Vagina (tissue), 2 donors: ENCODE measurements at regions of chr5 and their contacts with region 1.

Region 1: DNA sequence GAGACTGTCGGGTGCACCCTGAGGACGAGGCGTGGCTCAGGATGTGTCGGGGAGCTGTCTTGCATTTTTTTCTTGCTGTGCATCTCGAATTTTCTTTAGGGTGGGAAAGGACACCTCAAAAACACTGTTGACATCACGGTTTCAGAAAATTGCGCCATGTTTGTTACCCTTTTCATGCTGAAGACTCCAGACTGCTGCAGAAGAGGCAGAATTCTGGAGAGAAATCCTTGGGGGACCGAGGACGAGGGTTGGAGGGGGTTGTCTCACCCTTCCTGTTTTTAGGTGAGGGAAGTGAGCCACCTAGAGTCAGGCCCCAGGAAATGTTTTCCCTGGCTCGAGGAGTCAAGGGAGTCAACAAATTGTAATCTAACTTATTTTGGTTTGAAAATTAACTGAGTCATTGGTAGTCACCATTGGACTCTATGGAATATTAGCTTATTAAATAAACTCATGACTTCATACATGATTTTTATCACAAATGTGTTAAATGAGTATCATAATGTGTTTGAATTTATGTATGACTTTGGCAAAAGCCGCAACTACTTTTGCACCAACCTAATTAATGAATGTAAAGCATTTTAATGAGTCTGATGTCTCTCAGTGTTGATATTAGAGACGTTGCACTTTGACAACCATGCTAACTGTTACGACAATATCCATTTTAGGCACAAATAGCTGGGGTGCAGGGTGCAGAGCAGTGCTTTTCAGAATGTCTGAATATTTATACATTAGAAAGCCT is 724 bp upstream of the LYSMD3 start:
- DNase-seq: no peak
- H3K4me3 ChIP-seq: peak overlapping the region; percentile 91 to 96
- H3K27ac ChIP-seq: peak overlapping the region; percentile 97
- H3K4me1 ChIP-seq: peaks cover 34% of the 10 kb centered on the region
- H3K27me3 ChIP-seq: no peaks in the 10 kb centered on the region
- CTCF ChIP-seq: peak; percentile 44 to 64 (median 57)
- POLR2A ChIP-seq: no peak

Region 2: DNA sequence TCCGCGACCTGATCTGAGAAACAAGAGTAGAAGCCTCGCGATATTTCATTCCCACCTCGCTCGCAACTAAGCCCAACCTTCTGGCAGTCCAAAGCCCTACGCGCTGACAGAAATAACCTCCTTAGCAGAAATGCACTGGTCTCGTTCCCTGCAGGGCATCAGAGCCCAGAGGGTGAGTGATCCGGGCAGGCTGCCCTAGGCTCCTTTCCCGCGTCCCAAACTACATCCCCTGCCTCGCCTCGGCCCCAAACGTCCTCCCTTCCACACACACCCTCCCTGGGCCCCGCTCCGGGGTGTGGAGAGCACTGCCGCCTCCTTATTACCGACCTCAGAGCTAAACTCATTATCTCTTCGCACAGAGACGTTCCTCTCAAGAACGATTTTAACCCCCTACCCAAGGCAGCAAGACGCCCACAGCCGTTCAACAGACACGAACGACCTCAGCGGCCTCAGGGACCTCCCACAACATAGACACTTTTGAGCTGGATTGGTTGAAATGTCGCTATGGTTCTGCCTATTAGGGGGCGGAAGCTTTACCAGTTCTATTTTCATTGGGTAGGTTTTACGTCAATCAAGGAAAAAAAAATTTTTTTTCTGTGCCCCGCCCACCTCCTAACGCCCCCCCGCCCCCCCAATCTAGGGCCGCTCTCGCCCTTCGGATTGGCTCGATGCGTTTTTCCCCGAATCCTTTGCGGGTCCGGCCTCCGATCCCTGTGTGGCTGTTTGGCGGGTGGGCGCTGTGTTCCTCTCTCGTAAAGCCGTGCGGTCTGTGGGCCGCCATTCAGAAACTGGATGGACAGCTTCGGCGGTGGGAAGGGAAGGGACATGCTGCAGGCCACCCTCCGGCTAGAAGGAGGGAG is 120.6 kb before region 1 on chr5 and contains the start of gene CETN3:
- intact Hi-C with region 1: loop called (anchors 10 kb)
- DNase-seq: peak in 1 of 2 donors; percentile 98
- H3K4me3 ChIP-seq: peak within 1 kb of the TSS; percentile 68 to 69
- H3K27ac ChIP-seq: peak within 1 kb of the TSS; percentile 91
- H3K4me1 ChIP-seq: peaks cover 9% of the 10 kb centered on the region
- H3K27me3 ChIP-seq: no peaks in the 10 kb centered on the region
- CTCF ChIP-seq: no peak
- POLR2A ChIP-seq: peak in 1 of 2 donors; percentile 72
- total RNA-seq, gene CETN3: 11.0 TPM

Region 3: GRCh38 chr5:90474235-90475109 is 55.6 kb before region 1 on chr5 and contains the starts of genes MBLAC2 and POLR3G:
- intact Hi-C with region 1: loop called (anchors 5 kb)
- DNase-seq: peak in 1 of 2 donors; percentile 92
- H3K4me3 ChIP-seq: peak within 1 kb of the TSS; percentile 72 to 97
- H3K27ac ChIP-seq: peak within 1 kb of the TSS; percentile 80
- H3K4me1 ChIP-seq: peaks cover 19% of the 10 kb centered on the region
- H3K27me3 ChIP-seq: no peaks in the 10 kb centered on the region
- CTCF ChIP-seq: peak in 2 of 3 experiments; percentile 11 to 49
- POLR2A ChIP-seq: peak in 1 of 2 donors; percentile 68
- total RNA-seq, gene MBLAC2: 8.8 TPM
- total RNA-seq, gene POLR3G: 5.4 TPM

Region 4: GRCh38 chr5:90488791-90489190 is 41.3 kb before region 1 on chr5:
- intact Hi-C with region 1: no loop called
- DNase-seq: no peak
- H3K4me3 ChIP-seq: no peak overlapping the region
- H3K27ac ChIP-seq: no peak overlapping the region
- H3K4me1 ChIP-seq: no peaks in the 10 kb centered on the region
- H3K27me3 ChIP-seq: no peaks in the 10 kb centered on the region
- CTCF ChIP-seq: no peak
- POLR2A ChIP-seq: no peak